Activated naive CD4-positive, alpha-beta T cell treated with anti-CD3 and anti-CD28 coated beads for 36 hours (primary cell): ENCODE measurements at regions of chr16 and their contacts with region 1.

Region 1: DNA sequence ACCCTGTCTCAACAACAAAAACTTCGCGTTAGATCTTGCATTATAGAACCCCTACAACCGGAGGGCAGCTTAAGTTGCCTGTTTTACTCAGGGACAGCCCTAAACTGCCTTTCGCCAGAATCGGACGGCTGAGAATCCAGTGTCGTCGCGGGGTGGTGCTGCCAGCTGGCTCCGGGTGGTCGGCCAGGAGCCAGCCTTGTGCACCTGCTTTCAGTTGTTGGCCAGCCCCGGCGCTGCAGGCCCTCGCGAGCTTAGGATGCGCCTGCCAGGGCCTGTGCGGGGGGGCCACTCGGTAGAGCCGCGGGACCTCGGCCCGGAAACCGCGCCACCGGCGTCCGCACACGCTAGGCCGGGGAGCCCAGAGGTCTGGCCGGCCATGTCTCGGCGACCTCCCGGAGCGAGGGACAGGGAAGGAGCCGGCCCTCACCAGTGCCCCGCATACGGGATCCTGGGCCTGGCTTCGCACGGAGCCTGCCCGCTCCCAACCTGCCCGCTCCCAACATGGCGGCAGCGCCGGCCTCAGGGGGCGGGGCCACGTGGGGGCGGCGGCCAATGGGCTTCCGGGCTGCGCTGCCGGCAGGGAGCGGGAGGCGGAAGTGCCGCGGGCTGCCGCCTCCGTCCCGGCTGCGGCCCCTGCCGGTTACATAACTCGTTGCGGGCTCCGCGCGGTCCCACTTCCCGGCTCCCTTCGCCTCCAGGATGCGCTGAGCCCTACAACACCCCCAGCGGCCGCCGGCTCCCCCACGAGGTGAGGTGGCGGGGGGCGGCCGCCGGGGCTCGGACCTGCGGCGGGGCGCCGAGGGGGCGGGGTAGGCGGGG is 14.2 kb downstream of the NAA60 start:
- DNase-seq: peak; percentile 91
- H3K4me3 Mint-ChIP-seq: peak overlapping the region; percentile 79
- H3K27ac Mint-ChIP-seq: peak overlapping the region; percentile 88
- H3K4me1 Mint-ChIP-seq: peaks cover 44% of the 10 kb centered on the region
- H3K27me3 Mint-ChIP-seq: no peaks in the 10 kb centered on the region

Region 2: GRCh38 chr16:3182608-3183444 is 274.8 kb before region 1 on chr16:
- CTCF ChIA-PET with region 1: interaction called, 3 read pairs
- intact Hi-C with region 1: loop called (anchors 2 kb)
- DNase-seq: peak; percentile 72
- H3K4me3 Mint-ChIP-seq: peak overlapping the region; percentile 81
- H3K27ac Mint-ChIP-seq: peak overlapping the region; percentile 81
- H3K4me1 Mint-ChIP-seq: peaks cover 24% of the 10 kb centered on the region
- H3K27me3 Mint-ChIP-seq: peaks cover 61% of the 10 kb centered on the region

Region 3: GRCh38 chr16:3305109-3306068 is 152.3 kb before region 1 on chr16 and contains the starts of genes TIGD7 and ZNF75A:
- CTCF ChIA-PET with region 1: no interaction called
- intact Hi-C with region 1: loop called (anchors 1 kb)
- DNase-seq: peak; percentile 84
- H3K4me3 Mint-ChIP-seq: peak within 1 kb of the TSS; percentile 79
- H3K27ac Mint-ChIP-seq: peak within 1 kb of the TSS; percentile 77
- H3K4me1 Mint-ChIP-seq: peaks cover 21% of the 10 kb centered on the region
- H3K27me3 Mint-ChIP-seq: no peaks in the 10 kb centered on the region
- total RNA-seq, gene TIGD7: 3.8 to 4.1 TPM
- total RNA-seq, gene ZNF75A: 10.5 to 12.4 TPM

Region 4: GRCh38 chr16:3383045-3383448 is 74.6 kb before region 1 on chr16:
- CTCF ChIA-PET with region 1: no interaction called
- intact Hi-C with region 1: no loop called
- DNase-seq: no peak
- H3K4me3 Mint-ChIP-seq: no peak overlapping the region
- H3K27ac Mint-ChIP-seq: no peak overlapping the region
- H3K4me1 Mint-ChIP-seq: no peaks in the 10 kb centered on the region
- H3K27me3 Mint-ChIP-seq: no peaks in the 10 kb centered on the region

Region 5: DNA sequence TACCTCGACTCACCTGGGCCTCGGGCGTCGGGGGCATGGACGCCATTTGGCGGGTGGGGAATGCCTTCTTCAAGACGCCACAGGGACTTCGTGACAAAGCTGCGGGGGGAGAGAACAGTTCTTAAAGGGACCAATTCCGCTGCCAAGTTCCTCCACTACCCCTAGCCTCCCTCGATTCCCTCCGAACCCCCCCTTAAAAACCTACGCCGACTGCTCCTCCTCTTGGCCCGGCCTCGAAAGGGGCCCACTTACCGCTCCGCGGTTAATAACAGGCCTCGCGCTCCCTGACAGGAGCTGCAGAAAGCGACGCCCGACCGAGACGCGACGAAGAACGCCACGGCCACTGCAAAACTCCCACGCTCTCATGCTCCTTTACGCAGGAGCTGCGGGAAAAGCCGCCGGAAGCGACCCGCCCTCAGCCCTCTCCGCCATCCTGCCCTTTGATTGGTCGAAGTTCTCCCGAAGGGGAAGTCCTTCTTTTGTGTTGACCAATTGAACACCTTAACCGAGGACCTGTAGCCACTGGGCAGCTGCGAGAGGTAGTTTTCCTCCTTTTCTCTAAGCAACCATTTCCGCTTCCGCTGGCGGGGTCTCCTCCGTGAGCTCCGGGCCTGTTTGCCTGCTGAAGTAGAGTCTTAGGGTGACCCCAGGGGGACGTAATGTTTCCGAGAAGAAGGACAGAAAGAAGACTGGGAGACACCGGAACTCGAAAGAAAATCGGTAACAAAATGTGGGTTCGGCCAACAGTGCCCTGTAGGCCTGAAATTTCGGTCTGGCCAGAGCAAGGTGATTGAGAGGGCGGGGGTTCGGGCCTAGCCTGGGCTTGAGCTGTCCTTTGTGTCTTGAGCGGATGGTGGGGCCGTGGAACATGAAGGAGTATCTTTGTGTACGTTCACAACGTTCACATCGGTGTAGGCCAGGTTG is 14.3 kb before region 1 on chr16 and contains the starts of genes NAA60 and ZNF597:
- CTCF ChIA-PET with region 1: interaction called, 5 read pairs
- intact Hi-C with region 1: loop called (anchors 1 kb)
- DNase-seq: peak; percentile 87
- H3K4me3 Mint-ChIP-seq: peak within 1 kb of the TSS; percentile 95
- H3K27ac Mint-ChIP-seq: peak within 1 kb of the TSS; percentile 93
- H3K4me1 Mint-ChIP-seq: peaks cover 23% of the 10 kb centered on the region
- H3K27me3 Mint-ChIP-seq: no peaks in the 10 kb centered on the region
- total RNA-seq, gene NAA60: 20.0 to 27.1 TPM
- total RNA-seq, gene ZNF597: 1.1 TPM

Region 6: GRCh38 chr16:3578610-3579551 is 121.2 kb after region 1 on chr16:
- CTCF ChIA-PET with region 1: no interaction called
- intact Hi-C with region 1: loop called (anchors 5 kb)
- DNase-seq: peak; percentile 77
- H3K4me3 Mint-ChIP-seq: peak overlapping the region; percentile 95
- H3K27ac Mint-ChIP-seq: peak overlapping the region; percentile 78
- H3K4me1 Mint-ChIP-seq: peaks cover 41% of the 10 kb centered on the region
- H3K27me3 Mint-ChIP-seq: no peaks in the 10 kb centered on the region